Activated CD4-positive, alpha-beta T cell treated with anti-CD3 and anti-CD28 coated beads for 36 hours (primary cell): ENCODE measurements at regions of chr5 and their contacts with region 1.

Region 1: DNA sequence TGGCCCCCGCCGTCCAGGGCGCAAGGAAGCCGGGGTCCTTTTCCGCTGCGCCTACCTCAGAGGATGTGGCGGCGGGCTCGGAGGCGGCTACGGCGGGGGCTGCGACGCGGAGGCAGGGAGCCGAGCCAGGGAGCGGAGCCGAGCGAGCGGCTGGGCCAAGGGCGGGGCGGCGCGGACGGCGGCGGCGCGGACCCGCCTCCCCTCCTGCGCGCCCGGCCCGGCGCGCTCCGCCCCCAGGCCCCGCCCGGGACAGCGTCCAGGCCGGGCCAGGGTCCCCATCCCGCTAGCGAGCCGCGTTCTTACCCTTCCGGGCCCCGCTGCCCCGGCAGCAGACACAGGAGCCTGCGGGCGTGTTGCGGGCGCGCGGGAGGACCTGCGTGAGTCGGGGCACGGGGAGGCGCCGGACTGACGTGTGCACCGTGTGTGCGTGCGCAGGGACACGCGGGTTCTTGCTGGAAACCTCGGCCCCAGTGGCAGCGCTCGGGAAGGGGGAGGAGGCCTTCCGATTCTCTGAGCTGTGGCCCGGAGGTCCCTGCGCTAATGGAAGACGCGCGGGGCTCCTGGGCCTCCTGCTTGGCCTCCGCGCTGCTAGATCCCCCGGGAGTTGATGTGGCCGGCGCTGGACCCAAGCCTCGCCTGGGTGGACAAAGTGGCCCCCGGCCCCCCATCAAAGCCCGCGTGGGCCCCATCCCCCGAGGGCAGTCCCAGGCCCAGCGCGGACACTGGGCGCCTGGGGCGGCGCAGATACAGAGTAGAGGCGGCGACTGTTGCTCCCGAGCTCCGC is at the start of gene VDAC1:
- DNase-seq: peak; percentile 92
- ATAC-seq: peak; percentile 85
- H3K4me3 Mint-ChIP-seq: peak within 1 kb of the TSS; percentile 94
- H3K27ac Mint-ChIP-seq: peak within 1 kb of the TSS; percentile 98
- H3K4me1 Mint-ChIP-seq: peaks cover 44% of the 10 kb centered on the region
- H3K27me3 Mint-ChIP-seq: no peaks in the 10 kb centered on the region
- total RNA-seq, gene VDAC1: 482 to 486 TPM

Region 2: GRCh38 chr5:132963175-132964104 is 1041.3 kb before region 1 on chr5 and contains the start of gene AFF4:
- CTCF ChIA-PET with region 1: no interaction called
- POLR2A ChIA-PET with region 1: no interaction called
- intact Hi-C with region 1: loop called in 1 of 2 experiments (anchors 1 kb)
- DNase-seq: peak; percentile 94
- ATAC-seq: peak; percentile 92
- H3K4me3 Mint-ChIP-seq: peak within 1 kb of the TSS; percentile 96
- H3K27ac Mint-ChIP-seq: peak within 1 kb of the TSS; percentile 99
- H3K4me1 Mint-ChIP-seq: peaks cover 32% of the 10 kb centered on the region
- H3K27me3 Mint-ChIP-seq: no peaks in the 10 kb centered on the region
- total RNA-seq, gene AFF4: 20.9 to 29.3 TPM

Region 3: DNA sequence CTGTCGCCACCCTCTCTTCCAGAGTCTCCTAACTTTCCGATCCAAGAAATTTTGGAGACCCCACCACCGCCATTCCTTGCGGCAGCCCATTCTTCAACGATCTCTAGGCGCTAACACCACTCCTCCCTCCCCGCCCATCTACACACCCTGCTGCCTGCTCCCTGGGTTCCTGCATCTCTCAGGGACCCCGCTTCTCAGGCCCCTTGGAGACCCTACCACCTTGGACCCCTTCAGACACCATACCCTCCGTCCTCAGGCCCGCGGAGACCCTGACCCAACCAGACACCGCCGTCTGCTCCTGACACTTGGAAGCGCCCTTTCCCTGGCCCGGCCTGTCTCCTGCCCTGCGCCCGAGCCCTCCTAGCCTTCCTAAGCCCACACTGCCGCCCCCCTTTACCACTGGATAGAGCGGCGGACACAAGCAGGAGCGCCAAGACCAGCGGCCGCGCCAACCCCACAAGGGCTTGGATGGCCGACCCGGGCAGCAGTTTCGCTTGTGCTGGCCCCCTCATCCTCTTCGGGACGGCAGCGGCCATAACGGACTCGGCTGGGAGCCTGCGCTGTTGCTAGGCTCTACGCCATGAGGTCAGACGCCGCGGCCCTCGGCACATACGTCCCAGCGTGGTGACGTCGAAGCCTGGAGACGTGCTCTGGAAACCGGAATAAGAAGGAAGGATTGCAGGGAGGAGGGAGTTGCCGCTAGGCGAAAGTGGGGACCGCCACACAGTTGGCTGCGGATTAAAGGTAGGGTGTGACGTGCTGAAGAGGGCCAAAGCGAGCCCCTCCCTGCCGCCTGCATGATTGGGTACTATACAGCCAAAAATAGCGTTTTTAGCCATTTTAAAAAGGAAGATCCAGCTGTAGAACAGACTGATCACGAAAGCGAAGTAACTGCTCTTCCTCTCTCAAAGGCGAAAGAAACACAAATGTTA is 36.5 kb before region 1 on chr5 and contains the start of gene C5orf15:
- CTCF ChIA-PET with region 1: interaction called, 4 read pairs
- POLR2A ChIA-PET with region 1: no interaction called
- intact Hi-C with region 1: loop called (anchors 1 to 2 kb)
- DNase-seq: peak; percentile 97
- ATAC-seq: peak; percentile 97
- H3K4me3 Mint-ChIP-seq: peak within 1 kb of the TSS; percentile 94
- H3K27ac Mint-ChIP-seq: peak within 1 kb of the TSS; percentile 90
- H3K4me1 Mint-ChIP-seq: peaks cover 51% of the 10 kb centered on the region
- H3K27me3 Mint-ChIP-seq: no peaks in the 10 kb centered on the region
- total RNA-seq, gene C5orf15: 28.7 to 38.7 TPM

Region 4: GRCh38 chr5:134051305-134051704 is 46.5 kb after region 1 on chr5:
- CTCF ChIA-PET with region 1: no interaction called
- POLR2A ChIA-PET with region 1: no interaction called
- intact Hi-C with region 1: no loop called
- DNase-seq: peak; percentile 51
- ATAC-seq: peak; percentile 70
- H3K4me3 Mint-ChIP-seq: no peak overlapping the region
- H3K27ac Mint-ChIP-seq: no peak overlapping the region
- H3K4me1 Mint-ChIP-seq: peaks cover 51% of the 10 kb centered on the region
- H3K27me3 Mint-ChIP-seq: no peaks in the 10 kb centered on the region

Region 5: GRCh38 chr5:134176511-134177368 is 172.0 kb after region 1 on chr5 and contains the start of gene SKP1:
- CTCF ChIA-PET with region 1: no interaction called
- POLR2A ChIA-PET with region 1: interaction called, 5 read pairs
- intact Hi-C with region 1: loop called in 1 of 2 experiments (anchors 1 kb)
- DNase-seq: peak; percentile 91
- ATAC-seq: peak; percentile 85
- H3K4me3 Mint-ChIP-seq: peak within 1 kb of the TSS; percentile 98
- H3K27ac Mint-ChIP-seq: peak within 1 kb of the TSS; percentile 95
- H3K4me1 Mint-ChIP-seq: peaks cover 32% of the 10 kb centered on the region
- H3K27me3 Mint-ChIP-seq: no peaks in the 10 kb centered on the region
- total RNA-seq, gene SKP1: 218 to 265 TPM

Region 6: DNA sequence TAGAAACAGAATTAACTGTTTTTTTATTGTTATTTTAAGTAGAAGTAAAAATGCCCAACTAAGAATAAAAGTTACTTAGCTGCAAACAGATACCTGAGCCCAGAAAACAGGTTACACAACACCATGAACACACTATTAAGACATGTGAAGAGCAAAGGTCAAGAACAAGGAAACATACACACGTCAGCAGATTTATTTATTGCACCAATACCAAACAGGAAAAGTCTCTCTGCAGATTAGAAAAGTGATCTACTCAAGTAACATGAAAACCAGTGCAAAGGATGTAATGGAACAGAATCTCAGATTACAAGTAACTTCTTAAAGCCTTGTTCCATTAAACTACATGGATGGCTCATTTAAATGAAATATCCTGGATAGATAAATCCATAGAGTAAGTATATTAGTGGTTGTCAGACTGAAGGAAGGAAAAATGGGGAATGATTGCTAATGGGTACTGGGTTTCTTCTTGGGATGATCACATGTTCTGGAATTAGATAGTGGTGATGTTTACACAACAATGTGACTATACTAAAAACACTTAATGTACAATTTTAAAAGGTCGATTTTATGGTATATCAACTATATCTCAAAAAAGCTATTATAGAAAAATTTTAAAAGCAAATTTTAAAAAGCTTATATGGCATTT is 621.7 kb after region 1 on chr5:
- CTCF ChIA-PET with region 1: no interaction called
- POLR2A ChIA-PET with region 1: no interaction called
- intact Hi-C with region 1: no loop called
- DNase-seq: no peak
- ATAC-seq: no peak
- H3K4me3 Mint-ChIP-seq: no peak overlapping the region
- H3K27ac Mint-ChIP-seq: peak overlapping the region; percentile 29
- H3K4me1 Mint-ChIP-seq: peaks cover 22% of the 10 kb centered on the region
- H3K27me3 Mint-ChIP-seq: no peaks in the 10 kb centered on the region

Region 7: GRCh38 chr5:134758504-134759341 is 753.9 kb after region 1 on chr5 and contains the start of gene DDX46:
- CTCF ChIA-PET with region 1: no interaction called
- POLR2A ChIA-PET with region 1: no interaction called
- intact Hi-C with region 1: loop called in 1 of 2 experiments (anchors 1 kb)
- DNase-seq: peak; percentile 98
- ATAC-seq: peak; percentile 99
- H3K4me3 Mint-ChIP-seq: peak within 1 kb of the TSS; percentile 94
- H3K27ac Mint-ChIP-seq: peak within 1 kb of the TSS; percentile 89
- H3K4me1 Mint-ChIP-seq: peaks cover 29% of the 10 kb centered on the region
- H3K27me3 Mint-ChIP-seq: no peaks in the 10 kb centered on the region
- total RNA-seq, gene DDX46: 63.5 to 86.7 TPM